Heart left ventricle (tissue), 16 donors: ENCODE measurements at regions of chr16 and their contacts with region 1.

Region 1: GRCh38 chr16:10765772-10766171 is 22.1 kb downstream of the NUBP1 start:
- DNase-seq: no peak
- ATAC-seq: peak in 2 of 4 donors; percentile 19 to 20
- H3K4me3 ChIP-seq: no peak overlapping the region
- H3K27ac ChIP-seq: peak overlapping the region in 2 of 12 donors; percentile 3 to 27
- H3K4me1 ChIP-seq: peaks cover 0 to 42% (median 7%) of the 10 kb centered on the region in 12 donors
- H3K27me3 ChIP-seq: no peaks in the 10 kb centered on the region
- CTCF ChIP-seq: no peak
- POLR2A ChIP-seq: no peak

Region 2: GRCh38 chr16:10812312-10813098 is 46.7 kb after region 1 on chr16:
- intact Hi-C with region 1: loop called in 1 of 10 experiments (anchors 10 kb)
- DNase-seq: no peak
- ATAC-seq: peak in 1 of 4 donors; percentile 15
- H3K4me3 ChIP-seq: no peak overlapping the region
- H3K27ac ChIP-seq: peak overlapping the region in 1 of 12 donors; percentile 12
- H3K4me1 ChIP-seq: peaks cover 0 to 4% (median 0%) of the 10 kb centered on the region in 12 donors
- H3K27me3 ChIP-seq: no peaks in the 10 kb centered on the region
- CTCF ChIP-seq: no peak
- POLR2A ChIP-seq: no peak

Region 3: GRCh38 chr16:10902999-10903398 is 137.2 kb after region 1 on chr16:
- intact Hi-C with region 1: loop called in 1 of 10 experiments (anchors 5 kb)
- DNase-seq: no peak
- ATAC-seq: no peak
- H3K4me3 ChIP-seq: no peak overlapping the region
- H3K27ac ChIP-seq: no peak overlapping the region
- H3K4me1 ChIP-seq: peaks cover 0 to 8% (median 0%) of the 10 kb centered on the region in 12 donors
- H3K27me3 ChIP-seq: no peaks in the 10 kb centered on the region
- CTCF ChIP-seq: no peak
- POLR2A ChIP-seq: no peak

Region 4: DNA sequence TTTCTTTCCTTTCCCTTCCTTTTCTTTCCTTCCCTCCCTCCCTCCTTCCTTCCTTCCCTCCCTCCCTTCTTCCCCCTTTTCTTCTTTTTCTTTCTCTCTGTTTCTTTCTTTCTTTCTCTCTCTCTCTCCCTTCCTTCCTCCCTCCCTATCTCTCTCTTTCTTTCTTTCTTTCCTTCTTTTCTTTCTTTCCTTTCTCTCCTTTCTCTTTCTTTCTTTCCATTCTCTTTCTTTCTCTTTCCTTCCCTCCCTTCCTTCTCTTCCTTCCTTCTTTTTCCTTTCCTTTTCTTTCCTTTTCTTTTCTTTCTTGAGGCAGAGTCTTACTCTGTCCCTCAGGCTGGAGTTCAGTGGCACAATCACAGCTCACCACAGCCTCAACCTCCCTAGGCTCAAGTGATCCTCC is 145.5 kb after region 1 on chr16:
- intact Hi-C with region 1: loop called in 1 of 10 experiments (anchors 5 kb)
- DNase-seq: no peak
- ATAC-seq: no peak
- H3K4me3 ChIP-seq: no peak overlapping the region
- H3K27ac ChIP-seq: no peak overlapping the region
- H3K4me1 ChIP-seq: peaks cover 0 to 11% (median 0%) of the 10 kb centered on the region in 12 donors
- H3K27me3 ChIP-seq: no peaks in the 10 kb centered on the region
- CTCF ChIP-seq: no peak
- POLR2A ChIP-seq: no peak